ENCODE measurements at regions of chr6 and their contacts with region 1.

Region 1: DNA sequence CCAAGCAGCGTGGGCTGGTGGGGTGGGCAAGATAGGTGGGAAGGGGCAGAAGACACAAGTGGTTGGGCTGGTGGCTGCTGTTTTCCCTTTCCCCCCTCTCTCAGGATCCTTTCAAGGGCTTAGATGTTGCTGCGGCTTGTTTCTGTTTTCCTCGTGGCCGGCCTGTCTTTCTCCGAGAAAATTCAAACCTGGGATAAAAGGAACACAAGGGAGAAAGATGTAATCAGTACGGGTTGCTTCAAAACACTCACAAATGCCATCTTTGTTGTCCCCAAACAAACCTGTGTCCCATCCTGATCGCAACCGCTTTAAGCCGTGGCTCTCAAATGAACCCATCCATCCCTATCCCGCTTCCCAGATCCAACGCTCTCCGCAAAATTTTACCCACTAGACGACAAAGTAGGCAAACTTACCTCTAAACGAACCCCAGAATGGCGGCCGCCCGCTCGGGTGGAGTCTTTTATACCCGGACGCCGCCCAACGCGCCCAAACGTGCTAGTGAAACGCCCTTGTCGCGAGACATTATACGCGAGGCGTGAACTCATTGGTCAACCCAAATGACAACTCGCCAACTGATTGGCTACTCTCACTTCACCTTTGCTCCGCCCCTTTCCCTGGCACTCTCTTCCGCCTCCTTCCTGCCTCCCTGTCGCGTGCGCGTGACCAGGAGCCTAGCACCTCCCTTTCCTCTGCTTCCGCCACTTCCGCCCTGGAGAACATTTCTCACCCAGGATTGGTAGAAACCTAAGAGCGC is at the start of gene PPP1R10:
- DNase-seq: peak; percentile 99
- H3K4me3 Mint-ChIP-seq: peak within 1 kb of the TSS; percentile 91
- H3K27ac Mint-ChIP-seq: peak within 1 kb of the TSS; percentile 96
- H3K4me1 Mint-ChIP-seq: peaks cover 45% of the 10 kb centered on the region
- H3K27me3 Mint-ChIP-seq: no peaks in the 10 kb centered on the region
- total RNA-seq, gene PPP1R10: 96.1 to 103 TPM

Region 2: DNA sequence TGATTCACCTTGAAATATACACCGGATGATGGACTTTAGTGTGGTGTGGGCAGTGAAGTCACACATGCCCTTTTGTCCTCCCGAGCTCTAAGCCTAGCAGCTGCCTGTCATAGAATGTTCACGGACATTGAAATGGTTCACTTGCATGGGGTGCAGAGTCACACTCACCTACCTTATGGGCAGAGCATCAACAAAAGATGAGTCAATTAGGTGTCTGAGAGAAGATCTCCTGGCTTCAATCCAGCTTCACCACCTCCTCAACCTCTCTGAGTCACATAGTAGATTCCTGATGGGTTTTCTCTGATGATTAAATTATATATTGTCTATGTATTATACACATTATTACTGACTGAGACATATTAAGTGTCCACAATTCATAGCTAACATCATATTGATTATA is 175.8 kb before region 1 on chr6:
- CTCF ChIA-PET with region 1: no interaction called
- POLR2A ChIA-PET with region 1: no interaction called
- DNase-seq: no peak
- H3K4me3 Mint-ChIP-seq: no peak overlapping the region
- H3K27ac Mint-ChIP-seq: no peak overlapping the region
- H3K4me1 Mint-ChIP-seq: no peaks in the 10 kb centered on the region
- H3K27me3 Mint-ChIP-seq: peaks cover 87% of the 10 kb centered on the region

Region 3: GRCh38 chr6:30463651-30464618 is 153.1 kb before region 1 on chr6:
- CTCF ChIA-PET with region 1: no interaction called
- POLR2A ChIA-PET with region 1: no interaction called
- DNase-seq: peak; percentile 83
- H3K4me3 Mint-ChIP-seq: no peak overlapping the region
- H3K27ac Mint-ChIP-seq: no peak overlapping the region
- H3K4me1 Mint-ChIP-seq: peaks cover 37% of the 10 kb centered on the region
- H3K27me3 Mint-ChIP-seq: peaks cover 87% of the 10 kb centered on the region

Region 4: DNA sequence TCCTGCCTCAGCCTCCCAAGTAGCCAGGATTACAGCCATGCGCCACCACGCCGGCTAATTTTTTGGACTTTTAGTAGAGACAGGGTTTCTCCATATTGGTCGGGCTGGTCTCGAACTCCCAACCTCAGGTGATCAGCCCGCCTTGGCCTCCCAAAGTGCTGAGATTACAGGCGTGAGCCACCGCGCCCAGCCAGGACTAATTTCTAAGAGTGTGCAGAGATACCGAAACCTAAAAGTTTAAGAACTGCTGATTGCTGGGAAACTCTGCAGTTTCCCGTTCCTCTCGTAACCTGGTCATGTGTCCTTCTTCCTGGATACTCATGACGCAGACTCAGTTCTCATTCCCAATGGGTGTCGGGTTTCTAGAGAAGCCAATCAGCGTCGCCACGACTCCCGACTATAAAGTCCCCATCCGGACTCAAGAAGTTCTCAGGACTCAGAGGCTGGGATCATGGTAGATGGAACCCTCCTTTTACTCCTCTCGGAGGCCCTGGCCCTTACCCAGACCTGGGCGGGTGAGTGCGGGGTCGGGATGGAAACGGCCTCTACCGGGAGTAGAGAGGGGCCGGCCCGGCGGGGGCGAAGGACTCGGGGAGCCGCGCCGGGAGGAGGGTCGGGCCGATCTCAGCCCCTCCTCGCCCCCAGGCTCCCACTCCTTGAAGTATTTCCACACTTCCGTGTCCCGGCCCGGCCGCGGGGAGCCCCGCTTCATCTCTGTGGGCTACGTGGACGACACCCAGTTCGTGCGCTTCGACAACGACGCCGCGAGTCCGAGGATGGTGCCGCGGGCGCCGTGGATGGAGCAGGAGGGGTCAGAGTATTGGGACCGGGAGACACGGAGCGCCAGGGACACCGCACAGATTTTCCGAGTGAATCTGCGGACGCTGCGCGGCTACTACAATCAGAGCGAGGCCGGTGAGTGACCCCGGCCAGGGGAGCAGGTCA is 127.6 kb before region 1 on chr6 and contains the start of gene HLA-E:
- CTCF ChIA-PET with region 1: interaction called, 3 read pairs
- POLR2A ChIA-PET with region 1: interaction called, 15 read pairs
- DNase-seq: peak; percentile 93
- H3K4me3 Mint-ChIP-seq: peak within 1 kb of the TSS; percentile 100
- H3K27ac Mint-ChIP-seq: peak within 1 kb of the TSS; percentile 98
- H3K4me1 Mint-ChIP-seq: peaks cover 50% of the 10 kb centered on the region
- H3K27me3 Mint-ChIP-seq: peaks cover 15% of the 10 kb centered on the region
- total RNA-seq, gene HLA-E: 757 to 767 TPM

Region 5: DNA sequence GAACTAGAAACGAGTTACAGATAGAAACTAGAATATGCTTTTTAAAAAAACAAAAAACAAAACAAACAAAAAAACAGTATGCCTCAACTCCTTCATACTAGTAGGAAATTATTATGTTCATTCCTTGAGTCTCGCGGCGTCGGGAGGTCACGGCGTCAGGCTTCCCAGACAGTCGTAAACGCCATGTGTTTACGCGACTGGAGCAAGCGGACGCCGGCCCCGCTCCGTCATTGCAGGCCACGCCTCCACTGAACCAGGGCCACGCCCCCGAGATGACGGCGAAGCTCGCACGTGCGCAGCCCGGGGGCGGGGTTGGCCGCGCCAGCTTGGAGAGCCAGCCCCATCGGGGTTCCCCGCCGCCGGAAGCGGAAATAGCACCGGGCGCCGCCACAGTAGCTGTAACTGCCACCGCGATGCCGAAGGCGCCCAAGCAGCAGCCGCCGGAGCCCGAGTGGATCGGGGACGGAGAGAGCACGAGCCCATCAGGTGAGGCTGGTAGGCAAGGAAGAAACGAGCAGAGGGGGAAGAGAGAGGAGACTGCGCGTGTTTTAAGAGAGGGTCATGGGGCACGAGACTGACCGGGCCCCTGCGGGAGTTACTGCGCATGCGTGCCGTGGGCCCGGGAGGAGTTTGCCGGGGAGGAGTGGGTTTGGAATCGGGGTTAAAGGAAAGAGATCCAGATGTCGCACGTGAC is 45.8 kb before region 1 on chr6 and contains the start of gene ABCF1:
- CTCF ChIA-PET with region 1: no interaction called
- POLR2A ChIA-PET with region 1: interaction called, 22 read pairs
- DNase-seq: peak; percentile 99
- H3K4me3 Mint-ChIP-seq: peak within 1 kb of the TSS; percentile 97
- H3K27ac Mint-ChIP-seq: peak within 1 kb of the TSS; percentile 97
- H3K4me1 Mint-ChIP-seq: peaks cover 63% of the 10 kb centered on the region
- H3K27me3 Mint-ChIP-seq: no peaks in the 10 kb centered on the region
- total RNA-seq, gene ABCF1: 64.3 to 65.2 TPM

Region 6: DNA sequence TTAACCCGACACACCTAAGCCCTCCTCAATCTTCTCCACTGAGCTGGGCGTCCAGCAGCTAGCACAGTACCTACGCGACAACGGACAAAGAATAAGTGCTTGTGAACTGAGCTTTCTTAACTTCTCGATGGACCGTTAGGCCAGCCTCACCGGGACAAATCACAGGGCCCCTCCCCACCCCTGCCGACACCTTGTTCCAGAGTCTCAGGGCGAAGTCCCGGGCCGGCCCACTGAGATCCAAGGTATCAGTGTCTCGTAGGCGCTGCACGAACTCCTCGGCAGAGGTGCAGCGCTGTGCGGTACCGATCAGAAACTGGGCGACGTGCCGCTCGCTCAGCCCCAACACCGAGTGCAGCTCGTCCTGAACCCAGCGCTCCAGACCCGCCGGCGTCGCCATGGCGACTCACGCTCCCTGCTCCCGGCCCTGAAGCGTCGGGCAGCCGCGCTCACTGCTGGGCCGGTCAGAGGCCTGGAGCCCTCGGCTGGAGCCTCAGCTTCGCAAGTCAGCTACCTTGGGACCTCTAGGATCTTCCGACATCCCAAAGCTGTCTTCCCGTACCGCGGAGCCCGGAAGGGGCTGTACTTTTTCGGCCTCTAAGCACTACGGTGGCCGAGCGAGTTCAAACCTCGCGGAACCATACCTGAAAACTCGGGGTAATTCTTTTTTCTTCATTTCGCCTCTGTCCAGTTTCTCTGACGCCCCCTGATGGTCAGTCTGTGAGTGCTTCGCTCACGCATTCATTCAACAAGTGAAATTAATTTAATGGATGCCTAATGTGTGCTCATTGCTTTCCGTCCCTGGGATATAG is 55.7 kb after region 1 on chr6 and contains the start of gene DHX16:
- CTCF ChIA-PET with region 1: interaction called, 11 read pairs
- POLR2A ChIA-PET with region 1: interaction called, 25 read pairs
- DNase-seq: peak; percentile 92
- H3K4me3 Mint-ChIP-seq: peak within 1 kb of the TSS; percentile 89
- H3K27ac Mint-ChIP-seq: peak within 1 kb of the TSS; percentile 18
- H3K4me1 Mint-ChIP-seq: peaks cover 42% of the 10 kb centered on the region
- H3K27me3 Mint-ChIP-seq: no peaks in the 10 kb centered on the region
- total RNA-seq, gene DHX16: 35.6 to 37.6 TPM

Region 7: GRCh38 chr6:30711758-30712380 is 94.9 kb after region 1 on chr6:
- CTCF ChIA-PET with region 1: interaction called, 7 read pairs
- POLR2A ChIA-PET with region 1: interaction called, 35 read pairs
- DNase-seq: peak; percentile 28
- H3K4me3 Mint-ChIP-seq: peak overlapping the region; percentile 2
- H3K27ac Mint-ChIP-seq: peak overlapping the region; percentile 79
- H3K4me1 Mint-ChIP-seq: peaks cover 59% of the 10 kb centered on the region
- H3K27me3 Mint-ChIP-seq: no peaks in the 10 kb centered on the region

Measured in activated CD4-positive, alpha-beta memory T cell treated with anti-CD3 and anti-CD28 coated beads, Interleukin-2, amount 10 ng/mL, durations not matched to agents 7 days and 5 days (primary cell).